ENCODE measurements at regions of chr18 and their contacts with region 1.

Region 1: GRCh38 chr18:8988261-8988871 is 114.1 kb upstream of the NDUFV2 start:
- H3K4me3 Mint-ChIP-seq: no peak overlapping the region
- H3K27ac Mint-ChIP-seq: no peak overlapping the region
- H3K4me1 Mint-ChIP-seq: peaks cover 28% of the 10 kb centered on the region
- H3K27me3 Mint-ChIP-seq: peaks cover under 1% of the 10 kb centered on the region

Region 2: GRCh38 chr18:8478166-8478967 is 510.0 kb before region 1 on chr18:
- intact Hi-C with region 1: loop called (anchors 2 kb)
- H3K4me3 Mint-ChIP-seq: no peak overlapping the region
- H3K27ac Mint-ChIP-seq: no peak overlapping the region
- H3K4me1 Mint-ChIP-seq: no peaks in the 10 kb centered on the region
- H3K27me3 Mint-ChIP-seq: peaks cover 13% of the 10 kb centered on the region

Region 3: GRCh38 chr18:8635087-8635486 is 353.3 kb before region 1 on chr18:
- intact Hi-C with region 1: no loop called
- H3K4me3 Mint-ChIP-seq: no peak overlapping the region
- H3K27ac Mint-ChIP-seq: no peak overlapping the region
- H3K4me1 Mint-ChIP-seq: no peaks in the 10 kb centered on the region
- H3K27me3 Mint-ChIP-seq: no peaks in the 10 kb centered on the region

Region 4: GRCh38 chr18:8654503-8655451 is 333.6 kb before region 1 on chr18:
- intact Hi-C with region 1: loop called (anchors 1 kb)
- H3K4me3 Mint-ChIP-seq: no peak overlapping the region
- H3K27ac Mint-ChIP-seq: no peak overlapping the region
- H3K4me1 Mint-ChIP-seq: no peaks in the 10 kb centered on the region
- H3K27me3 Mint-ChIP-seq: peaks cover 17% of the 10 kb centered on the region

Region 5: DNA sequence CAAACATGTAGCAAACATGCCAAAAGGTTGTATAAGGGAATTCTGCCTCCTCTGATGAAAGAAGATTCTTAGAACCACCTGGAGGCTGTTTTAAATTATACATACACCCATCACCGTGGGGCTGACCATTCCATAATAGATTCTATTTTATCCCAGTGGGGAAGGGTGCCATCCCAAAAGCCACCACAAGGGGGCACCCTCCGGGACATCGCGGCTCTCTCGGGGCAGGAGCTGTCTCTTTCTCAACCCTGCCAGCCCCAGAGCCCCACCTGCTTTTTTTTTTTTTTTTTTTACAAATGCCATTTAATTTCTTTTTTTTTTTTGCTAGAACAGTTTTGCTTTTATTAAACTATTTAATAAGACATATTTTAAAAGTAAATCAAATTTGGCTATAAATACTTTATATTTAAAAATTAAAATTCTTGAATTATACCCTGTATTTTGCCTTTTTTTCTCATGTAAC is 291.6 kb before region 1 on chr18:
- intact Hi-C with region 1: loop called (anchors 1 kb)
- H3K4me3 Mint-ChIP-seq: no peak overlapping the region
- H3K27ac Mint-ChIP-seq: no peak overlapping the region
- H3K4me1 Mint-ChIP-seq: peaks cover 26% of the 10 kb centered on the region
- H3K27me3 Mint-ChIP-seq: peaks cover 13% of the 10 kb centered on the region

Region 6: GRCh38 chr18:9048808-9049494 is 60.6 kb after region 1 on chr18:
- intact Hi-C with region 1: loop called (anchors 2 kb)
- H3K4me3 Mint-ChIP-seq: no peak overlapping the region
- H3K27ac Mint-ChIP-seq: peak overlapping the region; percentile 83
- H3K4me1 Mint-ChIP-seq: peaks cover 18% of the 10 kb centered on the region
- H3K27me3 Mint-ChIP-seq: no peaks in the 10 kb centered on the region

Measured in dendritic cell treated with granulocyte-macrophage colony-stimulating factor and Interleukin-4, amounts not matched to agents 40 ng/mL and 50 ng/mL, for 4 days (primary cell).